Panc1 (cell line): ENCODE measurements at regions of chr12 and their contacts with region 1.

Region 1: GRCh38 chr12:123633379-123634141 is at the starts of genes EIF2B1 and GTF2H3:
- DNase-seq: peak; percentile 78
- ATAC-seq: peak; percentile 100
- H3K4me3 ChIP-seq: peak within 1 kb of the TSS; percentile 97 to 99
- H3K27ac ChIP-seq: peak within 1 kb of the TSS; percentile 92
- H3K4me1 ChIP-seq: peaks cover 5% of the 10 kb centered on the region; the same call in 1 of the 2 replicates
- H3K27me3 ChIP-seq: no peaks in the 10 kb centered on the region
- CTCF ChIP-seq: no peak
- total RNA-seq, gene EIF2B1: 49.4 TPM
- total RNA-seq, gene GTF2H3: 40.7 TPM

Region 2: DNA sequence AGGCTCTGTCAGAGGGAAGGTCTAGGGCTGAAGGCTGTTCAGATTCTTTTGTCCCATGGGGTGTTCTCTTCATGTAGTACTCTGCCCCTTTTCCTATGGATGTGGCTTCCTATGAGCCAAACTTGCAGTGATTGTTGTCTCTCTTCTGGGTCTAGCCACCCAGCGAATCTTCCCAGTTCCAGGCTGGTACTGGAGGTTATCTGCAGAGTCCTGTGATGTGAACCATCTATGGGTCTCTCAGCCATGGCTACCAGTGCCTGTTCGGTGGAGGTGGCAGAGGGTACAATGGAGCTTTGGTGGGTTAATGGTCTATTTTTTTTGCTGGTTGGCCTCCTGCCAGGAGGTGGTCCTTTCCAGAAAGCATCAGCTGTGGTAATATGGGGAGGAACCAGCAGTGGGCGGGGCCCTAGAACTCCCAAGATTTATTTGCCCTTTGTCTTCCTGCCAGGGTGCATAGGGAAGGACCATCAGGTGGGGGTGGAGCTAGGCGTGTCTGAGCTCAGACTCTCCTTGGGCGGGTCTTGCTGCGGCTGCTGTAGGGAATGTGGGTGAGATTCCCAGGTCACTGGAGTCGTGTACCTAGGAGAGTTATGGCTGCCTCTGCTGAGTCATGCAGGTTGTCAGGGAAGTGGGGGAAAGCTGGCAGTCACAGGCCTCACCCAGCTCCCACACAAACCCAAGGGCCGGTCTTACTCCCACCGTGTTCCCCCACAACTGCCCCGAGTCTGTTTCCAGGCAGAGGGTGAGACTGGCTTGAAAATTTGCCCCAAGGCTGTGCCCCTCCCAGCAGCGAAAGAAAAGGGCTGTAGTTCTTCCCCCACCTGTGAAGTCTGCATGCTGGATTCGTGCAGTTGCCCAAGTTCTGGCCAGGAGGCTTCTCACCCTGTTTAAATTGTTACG is 382.8 kb before region 1 on chr12:
- CTCF ChIA-PET with region 1: no interaction called
- POLR2A ChIA-PET with region 1: interaction called, 10 read pairs
- in situ Hi-C with region 1: no loop called
- intact Hi-C with region 1: no loop called
- DNase-seq: no peak
- ATAC-seq: peak; percentile 55
- H3K4me3 ChIP-seq: no peak overlapping the region
- H3K27ac ChIP-seq: peak overlapping the region; percentile 85
- H3K4me1 ChIP-seq: peaks cover 22% of the 10 kb centered on the region
- H3K27me3 ChIP-seq: no peaks in the 10 kb centered on the region
- CTCF ChIP-seq: no peak

Region 3: DNA sequence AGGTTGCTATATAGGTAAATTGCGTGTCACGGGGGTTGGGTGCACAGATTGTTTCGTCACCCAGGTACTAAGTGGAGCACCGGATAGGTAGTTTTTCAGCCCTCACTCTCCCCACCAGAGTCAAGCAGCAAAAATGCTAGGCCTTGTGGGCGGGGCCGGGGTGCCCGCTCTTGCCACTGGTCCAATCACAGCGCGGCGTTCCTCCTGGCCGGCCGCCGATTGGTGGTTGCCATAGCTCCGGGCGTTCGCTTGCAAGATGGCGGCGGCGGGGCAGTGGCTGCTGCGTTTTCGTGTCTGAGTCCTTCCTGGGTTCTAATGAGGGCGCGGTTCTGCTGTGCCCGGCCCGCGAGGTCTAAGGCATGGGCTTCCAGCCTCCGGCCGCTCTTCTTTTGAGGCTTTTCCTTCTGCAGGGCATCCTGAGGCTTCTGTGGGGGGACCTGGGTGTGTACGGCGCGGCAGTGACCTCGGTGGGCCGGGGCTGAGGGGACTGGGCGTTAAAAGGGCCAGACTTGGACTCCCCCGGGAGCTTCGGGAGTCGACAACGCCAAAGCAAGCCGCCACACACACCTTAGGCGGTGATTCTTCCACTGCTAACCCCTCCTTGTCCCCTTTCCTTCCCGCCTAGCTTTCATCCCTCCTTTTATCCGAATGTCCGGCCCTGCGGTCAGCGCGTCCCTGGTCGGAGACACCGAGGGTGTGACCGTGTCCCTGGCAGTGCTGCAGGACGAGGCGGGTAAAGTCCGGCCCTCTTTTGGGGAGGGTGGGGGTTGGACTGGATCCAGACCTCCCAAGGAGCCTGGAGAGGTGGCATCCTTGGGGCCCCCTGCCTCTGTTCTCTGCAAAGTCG is 37.5 kb after region 1 on chr12 and contains the start of gene TCTN2:
- CTCF ChIA-PET with region 1: no interaction called
- POLR2A ChIA-PET with region 1: interaction called, 12 read pairs
- in situ Hi-C with region 1: no loop called
- intact Hi-C with region 1: no loop called
- DNase-seq: peak; percentile 39
- ATAC-seq: peak; percentile 99
- H3K4me3 ChIP-seq: peak within 1 kb of the TSS; percentile 87 to 90
- H3K27ac ChIP-seq: peak within 1 kb of the TSS; percentile 75
- H3K4me1 ChIP-seq: peaks cover 10% of the 10 kb centered on the region; the same call in 1 of the 2 replicates
- H3K27me3 ChIP-seq: no peaks in the 10 kb centered on the region
- CTCF ChIP-seq: no peak
- total RNA-seq, gene TCTN2: 14.7 TPM